ENCODE measurements at regions of chr12 and their contacts with region 1.

Region 1: DNA sequence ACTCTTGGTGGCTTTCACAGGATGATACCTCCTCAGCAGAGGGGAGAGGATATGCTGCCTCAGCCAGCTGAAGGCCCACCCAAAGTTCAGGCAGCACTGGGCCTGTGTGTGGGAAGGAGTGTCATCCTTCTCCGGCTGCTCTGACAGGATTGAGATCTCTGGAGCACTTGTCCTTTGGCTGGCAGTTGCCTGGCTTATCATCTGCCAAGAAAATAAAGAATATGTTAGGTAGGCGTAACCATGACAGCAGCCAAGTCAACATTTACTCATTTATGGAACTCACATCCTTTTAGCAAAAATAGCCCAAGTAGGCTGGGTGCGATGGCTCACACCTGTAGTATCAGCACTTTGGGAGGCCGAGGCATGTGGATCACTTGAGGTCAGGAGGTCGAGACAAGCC is 68.5 kb downstream of the PPFIBP1 start:
- DNase-seq: no peak
- H3K4me3 ChIP-seq: no peak overlapping the region
- H3K27ac ChIP-seq: no peak overlapping the region
- H3K4me1 ChIP-seq: no peaks in the 10 kb centered on the region
- H3K27me3 ChIP-seq: no peaks in the 10 kb centered on the region
- CTCF ChIP-seq: no peak

Region 2: GRCh38 chr12:27523642-27524493 is 68.7 kb before region 1 on chr12 and contains the start of gene PPFIBP1:
- CTCF ChIA-PET with region 1: no interaction called
- POLR2A ChIA-PET with region 1: no interaction called
- intact Hi-C with region 1: no loop called
- DNase-seq: peak; percentile 99
- H3K4me3 ChIP-seq: peak within 1 kb of the TSS; percentile 69
- H3K27ac ChIP-seq: peak within 1 kb of the TSS; percentile 72
- H3K4me1 ChIP-seq: peaks cover 34% of the 10 kb centered on the region
- H3K27me3 ChIP-seq: no peaks in the 10 kb centered on the region
- CTCF ChIP-seq: 0 out of 2 replicates have a peak, but pooled peaks have one; percentile 17
- total RNA-seq, gene PPFIBP1: 41.2 and 49.1 TPM in 2 replicates

Region 3: GRCh38 chr12:27566159-27566558 is 26.4 kb before region 1 on chr12:
- CTCF ChIA-PET with region 1: interaction called, 13 read pairs
- POLR2A ChIA-PET with region 1: no interaction called
- intact Hi-C with region 1: no loop called
- DNase-seq: no peak
- H3K4me3 ChIP-seq: no peak overlapping the region
- H3K27ac ChIP-seq: no peak overlapping the region
- H3K4me1 ChIP-seq: peaks cover 9% of the 10 kb centered on the region
- H3K27me3 ChIP-seq: no peaks in the 10 kb centered on the region
- CTCF ChIP-seq: peak; percentile 35; the same call in 1 of the 2 replicates

Measured in A673 (cell line).